Activated B cell treated with CpG ODN at 0.5 μM for 24 hours (primary cell): ENCODE measurements at regions of chr10 and their contacts with region 1.

Region 1: DNA sequence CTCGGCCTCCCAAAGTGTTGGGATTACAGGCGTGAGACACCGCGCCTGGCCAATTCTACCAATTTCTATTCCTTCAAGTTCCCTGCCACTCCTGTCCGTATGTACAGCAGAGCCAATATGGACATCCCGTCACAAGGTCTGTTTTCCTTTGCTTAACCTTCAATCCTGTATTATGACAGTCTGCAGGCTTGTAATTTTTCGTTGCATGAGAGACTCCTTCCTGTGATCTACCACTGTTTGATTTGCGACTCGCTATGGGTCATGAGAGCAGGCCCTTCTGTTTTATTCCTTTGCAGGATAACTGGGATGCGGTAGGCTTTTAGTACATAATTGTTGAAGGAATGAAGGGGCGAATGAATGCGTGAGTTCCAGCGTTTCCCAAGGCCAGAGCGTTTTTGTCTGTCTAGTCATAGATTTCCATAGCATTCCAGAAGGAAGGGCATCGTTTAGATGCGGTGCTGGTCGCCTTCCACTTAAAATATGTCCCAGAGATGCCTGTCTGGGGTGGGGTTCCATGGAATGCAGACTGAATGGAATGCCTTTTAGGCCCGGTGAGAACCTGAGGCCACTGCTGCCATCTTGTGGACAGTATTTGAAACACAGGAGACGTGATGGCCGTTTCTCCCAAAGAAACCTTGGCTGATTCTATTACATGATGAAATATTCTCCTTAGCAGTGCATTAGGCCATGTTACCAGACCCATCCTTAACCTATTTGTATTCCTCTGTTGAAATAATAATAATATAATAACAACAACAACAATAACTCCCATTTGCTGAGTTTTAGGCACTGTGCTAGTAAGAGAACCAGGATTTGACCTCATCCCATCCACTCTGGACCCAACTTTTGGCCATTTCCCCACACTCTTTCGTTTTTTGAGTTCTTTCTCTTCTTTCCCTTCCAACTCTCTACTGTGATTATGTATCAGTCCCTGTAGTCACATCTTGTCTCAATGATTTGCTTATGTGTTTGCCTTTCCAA is 193.2 kb downstream of the MYOF start:
- DNase-seq: peak; percentile 19
- ATAC-seq: no peak
- H3K4me3 Mint-ChIP-seq: no peak overlapping the region
- H3K27ac Mint-ChIP-seq: no peak overlapping the region
- H3K4me1 Mint-ChIP-seq: no peaks in the 10 kb centered on the region
- H3K27me3 Mint-ChIP-seq: no peaks in the 10 kb centered on the region
- CTCF ChIP-seq: peak; percentile 62

Region 2: GRCh38 chr10:91908337-91909116 is 1380.4 kb before region 1 on chr10:
- CTCF ChIA-PET with region 1: no interaction called
- POLR2A ChIA-PET with region 1: no interaction called
- intact Hi-C with region 1: no loop called
- DNase-seq: peak; percentile 74
- ATAC-seq: peak; percentile 84
- H3K4me3 Mint-ChIP-seq: peak overlapping the region; percentile 92
- H3K27ac Mint-ChIP-seq: peak overlapping the region; percentile 86
- H3K4me1 Mint-ChIP-seq: peaks cover 19% of the 10 kb centered on the region
- H3K27me3 Mint-ChIP-seq: peaks cover 3% of the 10 kb centered on the region
- CTCF ChIP-seq: no peak

Region 3: GRCh38 chr10:93006435-93007039 is 282.4 kb before region 1 on chr10:
- CTCF ChIA-PET with region 1: no interaction called
- POLR2A ChIA-PET with region 1: no interaction called
- intact Hi-C with region 1: loop called (anchors 1 kb)
- DNase-seq: no peak
- ATAC-seq: no peak
- H3K4me3 Mint-ChIP-seq: no peak overlapping the region
- H3K27ac Mint-ChIP-seq: no peak overlapping the region
- H3K4me1 Mint-ChIP-seq: no peaks in the 10 kb centered on the region
- H3K27me3 Mint-ChIP-seq: no peaks in the 10 kb centered on the region
- CTCF ChIP-seq: no peak

Region 4: DNA sequence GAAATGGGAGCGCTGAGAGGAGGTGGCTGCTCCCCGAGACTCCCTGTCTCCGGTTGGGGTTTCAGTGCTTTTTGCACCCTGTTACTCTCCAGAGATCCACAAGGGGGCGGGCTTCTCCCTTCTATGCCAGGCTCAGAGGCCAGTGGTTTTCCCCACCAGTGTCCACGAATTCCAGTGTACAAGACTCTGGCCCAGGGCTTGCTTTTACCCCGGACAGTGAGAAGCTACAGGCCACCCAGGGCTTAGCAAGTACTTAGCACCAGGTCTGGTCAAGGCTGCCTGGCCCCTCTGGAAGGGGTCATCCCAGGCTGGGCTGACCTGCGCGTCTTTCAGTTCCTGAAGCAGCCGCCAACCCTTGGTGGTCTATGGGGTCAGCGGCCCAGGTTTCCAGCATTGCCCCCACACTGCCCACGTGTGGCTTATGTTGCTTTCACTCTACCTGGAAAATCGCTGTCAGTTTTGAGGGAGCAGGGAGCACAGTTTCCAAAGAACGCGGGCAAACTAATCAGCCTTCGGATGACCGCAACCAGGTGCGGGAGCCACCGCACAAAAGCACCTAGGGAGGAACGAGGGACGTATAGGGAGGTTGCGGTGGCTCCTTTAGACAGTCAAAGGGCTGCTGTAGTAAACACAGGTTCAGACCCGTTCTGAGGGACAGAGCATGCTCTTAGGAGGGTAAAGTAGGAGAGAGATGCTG is 208.4 kb before region 1 on chr10:
- CTCF ChIA-PET with region 1: interaction called, 8 read pairs
- POLR2A ChIA-PET with region 1: no interaction called
- intact Hi-C with region 1: loop called (anchors 1 kb)
- DNase-seq: no peak
- ATAC-seq: peak; percentile 56
- H3K4me3 Mint-ChIP-seq: no peak overlapping the region
- H3K27ac Mint-ChIP-seq: no peak overlapping the region
- H3K4me1 Mint-ChIP-seq: peaks cover 9% of the 10 kb centered on the region
- H3K27me3 Mint-ChIP-seq: peaks cover 51% of the 10 kb centered on the region
- CTCF ChIP-seq: no peak

Region 5: GRCh38 chr10:93115661-93116383 is 173.1 kb before region 1 on chr10:
- CTCF ChIA-PET with region 1: interaction called, 4 read pairs
- POLR2A ChIA-PET with region 1: interaction called, 4 read pairs
- intact Hi-C with region 1: loop called (anchors 1 kb)
- DNase-seq: peak; percentile 36
- ATAC-seq: peak; percentile 69
- H3K4me3 Mint-ChIP-seq: no peak overlapping the region
- H3K27ac Mint-ChIP-seq: no peak overlapping the region
- H3K4me1 Mint-ChIP-seq: peaks cover 17% of the 10 kb centered on the region
- H3K27me3 Mint-ChIP-seq: peaks cover 4% of the 10 kb centered on the region
- CTCF ChIP-seq: no peak